CD4-positive, alpha-beta T cell (primary cell): ENCODE measurements at regions of chr14 and their contacts with region 1.

Region 1: GRCh38 chr14:55579724-55580469 is at the start of gene KTN1:
- DNase-seq: peak; percentile 70 to 94 (median 84)
- ATAC-seq: peak; percentile 87
- H3K4me3 ChIP-seq: peak within 1 kb of the TSS; percentile 81
- H3K4me3 Mint-ChIP-seq: peak within 1 kb of the TSS; percentile 98
- H3K27ac ChIP-seq: peak within 1 kb of the TSS; percentile 68 to 82
- H3K27ac Mint-ChIP-seq: peak within 1 kb of the TSS; percentile 92
- H3K4me1 ChIP-seq: peaks cover 27% of the 10 kb centered on the region
- H3K4me1 Mint-ChIP-seq: peaks cover 28% of the 10 kb centered on the region
- H3K27me3 ChIP-seq: no peaks in the 10 kb centered on the region
- H3K27me3 Mint-ChIP-seq: no peaks in the 10 kb centered on the region
- CTCF ChIP-seq: no peak
- total RNA-seq, gene KTN1: 59.9 to 68.4 TPM

Region 2: DNA sequence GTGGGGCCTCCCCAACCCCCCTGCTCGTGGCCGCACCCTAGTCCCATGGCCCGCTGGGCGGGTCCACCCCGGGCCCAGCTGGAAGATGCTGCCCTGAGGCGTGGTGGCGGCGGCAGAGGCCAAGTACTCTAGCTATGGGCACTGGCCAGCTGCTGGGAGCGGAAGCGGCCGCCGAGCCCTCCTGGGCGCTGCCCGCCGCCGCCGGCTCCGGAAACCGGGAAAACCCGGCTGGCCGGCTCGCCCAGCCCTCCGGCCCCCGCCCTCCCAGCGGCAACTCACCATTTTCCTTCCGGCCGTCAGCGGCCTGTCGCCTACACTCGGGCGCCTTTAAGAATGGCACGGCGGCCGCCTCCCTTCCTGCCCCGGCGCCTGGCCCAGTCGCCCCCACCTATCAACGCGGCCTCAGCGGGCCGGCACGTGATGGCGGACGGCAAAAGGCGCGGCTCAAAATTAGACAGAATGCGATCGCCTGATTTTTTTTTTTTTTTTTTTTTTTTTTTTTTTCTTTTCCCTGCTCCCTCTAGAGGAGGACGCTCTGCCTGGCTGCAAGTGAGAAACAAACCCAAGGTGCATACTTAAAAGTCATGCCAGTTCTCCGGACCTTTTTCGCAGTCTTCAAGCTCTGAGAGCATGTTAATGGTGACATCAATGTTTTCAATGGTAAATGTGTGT is 1091.1 kb before region 1 on chr14 and contains the start of gene GMFB:
- CTCF ChIA-PET with region 1: no interaction called
- POLR2A ChIA-PET with region 1: no interaction called
- intact Hi-C with region 1: loop called in 1 of 2 experiments (anchors 10 kb)
- DNase-seq: peak; percentile 79 to 95 (median 87)
- ATAC-seq: peak; percentile 95
- H3K4me3 ChIP-seq: peak within 1 kb of the TSS; percentile 95
- H3K4me3 Mint-ChIP-seq: peak within 1 kb of the TSS; percentile 99
- H3K27ac ChIP-seq: peak within 1 kb of the TSS; percentile 68 to 84
- H3K27ac Mint-ChIP-seq: peak within 1 kb of the TSS; percentile 86
- H3K4me1 ChIP-seq: peaks cover 32% of the 10 kb centered on the region
- H3K4me1 Mint-ChIP-seq: peaks cover 70% of the 10 kb centered on the region
- H3K27me3 ChIP-seq: no peaks in the 10 kb centered on the region
- H3K27me3 Mint-ChIP-seq: no peaks in the 10 kb centered on the region
- CTCF ChIP-seq: no peak
- total RNA-seq, gene GMFB: 39.5 to 43.5 TPM

Region 3: DNA sequence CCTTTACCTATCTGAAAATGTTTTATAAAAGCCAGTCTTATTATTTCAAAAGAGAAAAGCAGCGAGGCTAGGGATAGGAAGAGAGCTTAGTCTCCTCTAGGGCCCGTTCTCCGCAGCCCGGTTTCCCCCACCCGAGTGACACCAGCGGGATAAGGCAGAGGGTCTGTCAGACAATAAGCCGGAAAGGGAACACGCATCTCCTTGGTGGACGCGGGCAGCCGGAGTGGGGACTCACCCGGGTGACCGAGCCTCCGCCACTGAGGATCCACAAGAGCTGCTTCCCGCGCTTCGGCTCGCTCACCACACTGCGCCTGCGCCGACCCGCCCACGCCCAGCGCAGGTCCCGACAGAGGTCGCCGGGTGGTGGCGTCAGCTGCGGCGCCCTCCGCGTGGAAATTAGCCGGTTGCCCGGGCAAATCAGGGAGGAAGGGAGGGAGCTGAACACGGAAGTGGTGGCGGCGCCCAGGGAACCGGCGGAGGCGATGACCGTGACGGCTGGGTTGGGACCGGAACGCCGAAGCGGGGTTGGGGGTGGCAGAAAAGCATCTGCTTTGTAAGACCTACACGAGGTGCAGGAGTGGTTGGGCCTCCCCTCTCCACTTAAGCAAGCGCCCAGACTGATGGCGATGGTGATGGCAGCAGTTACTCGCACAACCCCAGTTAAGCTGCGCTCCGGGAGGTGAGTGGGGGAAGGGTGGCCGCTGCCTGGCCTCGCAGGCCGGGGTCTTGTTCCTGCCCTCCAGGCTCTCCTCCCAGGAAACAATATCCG is 552.9 kb before region 1 on chr14 and contains the starts of genes SOCS4 and WDHD1:
- CTCF ChIA-PET with region 1: no interaction called
- POLR2A ChIA-PET with region 1: no interaction called
- intact Hi-C with region 1: loop called in 1 of 2 experiments (anchors 10 kb)
- DNase-seq: peak; percentile 90 to 98 (median 94)
- ATAC-seq: peak; percentile 87
- H3K4me3 ChIP-seq: peak within 1 kb of the TSS; percentile 79
- H3K4me3 Mint-ChIP-seq: peak within 1 kb of the TSS; percentile 91
- H3K27ac ChIP-seq: peak within 1 kb of the TSS; percentile 78 to 87
- H3K27ac Mint-ChIP-seq: peak within 1 kb of the TSS; percentile 88
- H3K4me1 ChIP-seq: peaks cover 9% of the 10 kb centered on the region
- H3K4me1 Mint-ChIP-seq: peaks cover 62% of the 10 kb centered on the region
- H3K27me3 ChIP-seq: no peaks in the 10 kb centered on the region
- H3K27me3 Mint-ChIP-seq: no peaks in the 10 kb centered on the region
- CTCF ChIP-seq: peak; percentile 9
- total RNA-seq, gene SOCS4: 19.5 to 20.7 TPM
- total RNA-seq, gene WDHD1: 1.8 to 2.2 TPM

Region 4: GRCh38 chr14:55270832-55271565 is 308.9 kb before region 1 on chr14 and contains the start of gene FBXO34:
- CTCF ChIA-PET with region 1: no interaction called
- POLR2A ChIA-PET with region 1: no interaction called
- intact Hi-C with region 1: loop called in 1 of 2 experiments (anchors 5 kb)
- DNase-seq: peak; percentile 96 to 100 (median 100)
- ATAC-seq: peak; percentile 91
- H3K4me3 ChIP-seq: peak within 1 kb of the TSS; percentile 98
- H3K4me3 Mint-ChIP-seq: peak within 1 kb of the TSS; percentile 97
- H3K27ac ChIP-seq: peak within 1 kb of the TSS; percentile 55 to 61
- H3K27ac Mint-ChIP-seq: peak within 1 kb of the TSS; percentile 94
- H3K4me1 ChIP-seq: peaks cover 9% of the 10 kb centered on the region
- H3K4me1 Mint-ChIP-seq: peaks cover 47% of the 10 kb centered on the region
- H3K27me3 ChIP-seq: no peaks in the 10 kb centered on the region
- H3K27me3 Mint-ChIP-seq: no peaks in the 10 kb centered on the region
- CTCF ChIP-seq: peak; percentile 97
- total RNA-seq, gene FBXO34: 28.3 to 29.7 TPM

Region 5: DNA sequence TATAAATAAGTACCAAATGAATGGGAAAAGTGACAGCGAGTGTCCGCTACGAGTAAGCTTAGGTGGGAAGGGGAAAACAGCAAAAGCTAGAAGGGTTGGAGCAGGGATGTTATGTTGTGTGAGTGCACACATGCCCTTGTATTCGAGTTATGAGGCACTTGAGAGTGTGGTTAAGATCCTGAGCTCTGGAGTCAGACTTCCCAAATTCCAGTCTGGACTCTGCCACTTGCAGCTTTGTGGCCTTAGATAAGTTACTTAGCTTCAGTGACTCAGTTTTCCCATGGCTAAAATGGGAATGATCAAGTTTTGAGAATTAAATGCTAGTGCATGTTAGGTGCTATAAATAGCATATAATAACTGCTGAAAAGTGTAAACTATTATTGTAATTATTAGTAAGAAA is 45.0 kb after region 1 on chr14:
- CTCF ChIA-PET with region 1: no interaction called
- POLR2A ChIA-PET with region 1: no interaction called
- intact Hi-C with region 1: loop called in 1 of 2 experiments (anchors 5 kb)
- DNase-seq: no peak
- ATAC-seq: no peak
- H3K4me3 ChIP-seq: no peak overlapping the region
- H3K4me3 Mint-ChIP-seq: no peak overlapping the region
- H3K27ac ChIP-seq: no peak overlapping the region
- H3K27ac Mint-ChIP-seq: no peak overlapping the region
- H3K4me1 ChIP-seq: no peaks in the 10 kb centered on the region
- H3K4me1 Mint-ChIP-seq: peaks cover 7% of the 10 kb centered on the region
- H3K27me3 ChIP-seq: no peaks in the 10 kb centered on the region
- H3K27me3 Mint-ChIP-seq: no peaks in the 10 kb centered on the region
- CTCF ChIP-seq: no peak

Region 6: GRCh38 chr14:56579345-56580220 is 999.7 kb after region 1 on chr14 and contains the start of gene TMEM260:
- CTCF ChIA-PET with region 1: no interaction called
- POLR2A ChIA-PET with region 1: no interaction called
- intact Hi-C with region 1: loop called in 1 of 2 experiments (anchors 5 kb)
- DNase-seq: peak; percentile 84 to 95 (median 92)
- ATAC-seq: peak; percentile 92
- H3K4me3 ChIP-seq: peak within 1 kb of the TSS; percentile 72
- H3K4me3 Mint-ChIP-seq: peak within 1 kb of the TSS; percentile 89
- H3K27ac ChIP-seq: peak within 1 kb of the TSS; percentile 71 to 75
- H3K27ac Mint-ChIP-seq: peak within 1 kb of the TSS; percentile 67
- H3K4me1 ChIP-seq: peaks cover 12% of the 10 kb centered on the region
- H3K4me1 Mint-ChIP-seq: peaks cover 48% of the 10 kb centered on the region
- H3K27me3 ChIP-seq: no peaks in the 10 kb centered on the region
- H3K27me3 Mint-ChIP-seq: peaks cover 2% of the 10 kb centered on the region
- CTCF ChIP-seq: peak; percentile 91
- total RNA-seq, gene TMEM260: 8.7 to 9.2 TPM

Region 7: GRCh38 chr14:57390028-57390805 is 1810.3 kb after region 1 on chr14 and contains the start of gene NAA30:
- CTCF ChIA-PET with region 1: no interaction called
- POLR2A ChIA-PET with region 1: no interaction called
- intact Hi-C with region 1: loop called in 1 of 2 experiments (anchors 5 kb)
- DNase-seq: peak; percentile 80 to 98 (median 90)
- ATAC-seq: peak; percentile 91
- H3K4me3 ChIP-seq: peak within 1 kb of the TSS; percentile 91
- H3K4me3 Mint-ChIP-seq: peak within 1 kb of the TSS; percentile 94
- H3K27ac ChIP-seq: peak within 1 kb of the TSS; percentile 75 to 89
- H3K27ac Mint-ChIP-seq: peak within 1 kb of the TSS; percentile 93
- H3K4me1 ChIP-seq: peaks cover 19% of the 10 kb centered on the region
- H3K4me1 Mint-ChIP-seq: peaks cover 53% of the 10 kb centered on the region
- H3K27me3 ChIP-seq: no peaks in the 10 kb centered on the region
- H3K27me3 Mint-ChIP-seq: no peaks in the 10 kb centered on the region
- CTCF ChIP-seq: no peak
- total RNA-seq, gene NAA30: 25.8 to 27.7 TPM